Gastrocnemius medialis (tissue), 4 donors: ENCODE measurements at regions of chr19 and their contacts with region 1.

Region 1: DNA sequence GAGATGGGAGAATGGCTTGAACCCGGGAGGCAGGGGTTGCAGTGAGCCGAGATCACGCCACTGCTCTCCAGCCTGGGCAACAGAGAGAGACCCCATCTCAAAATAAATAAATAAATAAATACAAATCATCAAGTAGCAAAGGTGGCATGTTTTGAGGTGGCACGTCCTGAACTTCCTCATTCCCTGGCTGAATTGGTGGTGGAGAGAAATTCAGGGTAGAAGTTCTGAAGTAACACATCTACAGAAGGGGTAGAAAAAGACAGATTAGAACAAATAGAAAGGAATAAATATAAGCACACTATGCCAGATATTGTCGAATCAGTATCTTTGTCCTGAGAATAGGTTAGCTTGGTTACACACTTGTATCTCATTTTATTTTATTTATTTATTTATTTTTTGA is 6.3 kb downstream of the IFI30 start:
- DNase-seq: no peak
- ATAC-seq: no peak
- H3K4me3 ChIP-seq: no peak overlapping the region
- H3K27ac ChIP-seq: no peak overlapping the region
- H3K4me1 ChIP-seq: no peaks in the 10 kb centered on the region
- H3K27me3 ChIP-seq: peaks cover 0 to 3% (median 0%) of the 10 kb centered on the region in 3 donors
- CTCF ChIP-seq: no peak
- POLR2A ChIP-seq: no peak

Region 2: DNA sequence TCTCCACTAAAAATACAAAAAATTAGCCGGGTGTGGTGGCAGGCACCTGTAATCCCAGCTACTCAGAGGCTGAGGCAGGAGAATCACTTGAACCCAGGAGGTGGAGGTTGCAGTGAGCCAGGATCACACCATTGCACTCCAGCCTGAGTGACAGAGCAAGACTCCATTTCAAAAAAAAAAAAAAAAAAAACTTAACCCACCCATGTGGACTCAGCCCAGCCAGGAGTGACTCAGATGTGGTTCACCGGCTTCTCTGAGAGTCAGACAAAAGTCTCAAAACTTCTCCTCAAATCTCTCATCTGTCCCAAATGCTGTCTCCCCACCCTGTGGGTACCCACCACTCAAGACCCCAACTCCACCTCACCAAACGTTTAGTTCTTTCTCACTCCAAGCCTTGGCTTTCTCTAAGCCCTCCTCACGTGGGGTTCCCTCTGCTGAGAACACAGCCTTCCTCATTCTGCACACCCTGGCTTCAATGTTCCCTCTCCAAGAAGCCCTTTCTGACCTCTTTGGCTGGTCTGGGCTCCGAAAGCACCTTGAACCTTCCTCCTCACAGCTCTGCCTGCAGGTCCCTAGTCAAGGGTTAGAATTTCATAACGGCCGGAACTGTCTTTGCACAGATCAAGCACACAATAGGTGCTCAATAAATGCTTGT is 34.9 kb after region 1 on chr19:
- in situ Hi-C with region 1: no loop called
- intact Hi-C with region 1: loop called (anchors 1 kb)
- DNase-seq: no peak
- ATAC-seq: no peak
- H3K4me3 ChIP-seq: no peak overlapping the region
- H3K27ac ChIP-seq: no peak overlapping the region
- H3K4me1 ChIP-seq: no peaks in the 10 kb centered on the region
- H3K27me3 ChIP-seq: no peaks in the 10 kb centered on the region
- CTCF ChIP-seq: no peak
- POLR2A ChIP-seq: no peak

Region 3: DNA sequence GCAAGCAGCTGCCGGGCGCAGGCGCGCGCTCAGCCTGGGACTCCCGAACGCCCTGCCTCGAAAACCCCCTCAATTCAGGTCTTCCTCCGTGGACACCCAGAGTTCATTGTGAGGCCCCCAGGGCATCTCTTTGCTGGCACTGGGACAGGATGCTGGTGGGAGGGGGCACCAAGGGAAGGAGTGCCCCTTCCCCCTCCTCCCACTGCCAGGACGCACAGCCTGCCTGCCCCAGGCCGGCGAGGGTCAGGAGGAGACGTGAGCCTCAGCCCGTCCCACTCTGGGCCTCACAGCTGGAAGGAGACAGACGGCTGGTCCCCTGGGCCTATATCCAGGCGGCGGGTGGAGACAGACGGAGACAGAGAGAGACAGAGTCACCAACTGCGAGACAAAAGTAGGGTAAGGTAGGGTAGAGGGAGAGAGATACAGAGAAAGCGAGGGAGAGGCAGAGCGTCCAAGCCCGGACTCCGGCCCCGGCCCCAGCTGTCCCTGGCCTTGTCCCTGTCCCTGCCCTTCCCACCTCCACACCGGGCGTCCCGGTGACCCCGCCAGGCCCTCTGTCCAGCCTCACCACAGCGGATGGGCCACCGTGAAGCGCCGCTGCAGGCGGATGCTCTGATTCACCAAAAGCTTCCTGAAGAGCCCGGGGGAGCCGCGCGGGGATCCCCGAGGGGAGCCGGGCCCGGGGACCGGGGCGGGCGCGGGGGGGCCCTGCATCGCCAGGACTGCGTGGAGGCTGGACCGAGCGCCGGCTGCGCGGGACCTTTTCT is 45.9 kb after region 1 on chr19 and contains the start of gene PDE4C:
- in situ Hi-C with region 1: no loop called
- intact Hi-C with region 1: no loop called
- DNase-seq: no peak
- ATAC-seq: peak in 1 of 2 donors; percentile 16
- H3K4me3 ChIP-seq: peak within 1 kb of the TSS in 3 of 4 donors; percentile 32 to 63 (median 62)
- H3K27ac ChIP-seq: peak within 1 kb of the TSS; percentile 72 to 82 (median 76)
- H3K4me1 ChIP-seq: peaks cover 17 to 24% of the 10 kb centered on the region in 2 donors
- H3K27me3 ChIP-seq: peaks cover 0 to 4% (median 0%) of the 10 kb centered on the region in 3 donors
- CTCF ChIP-seq: no peak
- POLR2A ChIP-seq: no peak
- total RNA-seq, gene PDE4C: 0.65 to 2.6 (median 0.76) TPM in 3 of 4 donors, not detected in the other